SK-N-SH (cell line): ENCODE measurements at regions of chr12 and their contacts with region 1.

Region 1: DNA sequence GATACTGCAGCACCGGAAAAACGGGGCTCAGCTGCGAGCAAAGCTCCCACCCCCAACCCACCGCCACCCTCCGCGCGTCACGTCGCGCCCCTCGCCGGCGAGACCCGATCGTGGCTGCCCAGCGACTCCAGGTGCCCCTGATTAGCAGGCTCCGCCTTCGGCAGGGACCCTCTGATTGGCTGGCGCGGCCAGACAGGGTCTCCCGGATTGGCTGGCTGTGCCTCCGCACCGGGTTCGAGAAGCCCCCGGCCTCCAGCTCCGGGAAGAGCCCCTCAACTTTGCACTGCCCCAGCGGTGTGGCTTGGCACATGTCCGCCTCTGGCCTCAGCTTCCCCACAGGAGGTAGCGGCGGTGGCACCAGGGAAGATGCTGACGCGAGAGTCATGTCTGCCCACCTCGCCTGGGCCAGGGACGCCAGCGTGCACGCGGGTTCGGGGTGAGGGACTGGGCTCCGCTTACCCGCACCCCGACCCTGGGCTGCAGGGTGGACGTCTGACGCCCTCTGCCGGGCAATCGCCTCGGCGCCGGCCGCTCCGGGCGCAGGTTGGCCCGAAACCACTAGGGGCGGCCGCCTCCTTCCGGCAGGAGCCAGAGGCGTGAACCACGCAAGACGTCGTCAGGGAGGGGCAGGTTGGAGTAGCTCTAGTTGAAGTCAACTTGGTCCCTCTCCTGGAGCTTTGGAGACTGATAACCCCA is 498 bp upstream of the RHOF start:
- DNase-seq: peak; percentile 94
- H3K4me3 ChIP-seq: peak overlapping the region; percentile 54 to 61
- H3K27ac ChIP-seq: peak overlapping the region; percentile 82 to 99
- H3K4me1 ChIP-seq: peaks cover 36 to 62% of the 10 kb centered on the region in 2 experiments
- H3K27me3 ChIP-seq: no peaks in the 10 kb centered on the region
- CTCF ChIP-seq: peak; percentile 97
- EP300 ChIP-seq: peak in 1 of 2 experiments; percentile 9; a peak in 1 of 4 replicates
- RAD21 ChIP-seq: peak; percentile 83

Region 2: GRCh38 chr12:121697098-121697698 is 96.8 kb before region 1 on chr12:
- CTCF ChIA-PET with region 1: interaction called, 69 read pairs
- POLR2A ChIA-PET with region 1: no interaction called
- DNase-seq: peak; percentile 51
- H3K4me3 ChIP-seq: peak overlapping the region in 1 of 2 experiments; percentile 17; a peak in 1 of 4 replicates
- H3K27ac ChIP-seq: peak overlapping the region in 1 of 2 experiments; percentile 13; a peak in 1 of 4 replicates
- H3K4me1 ChIP-seq: no peaks in the 10 kb centered on the region
- H3K27me3 ChIP-seq: no peaks in the 10 kb centered on the region
- CTCF ChIP-seq: peak; percentile 70
- EP300 ChIP-seq: no peak
- RAD21 ChIP-seq: peak; percentile 80

Region 3: DNA sequence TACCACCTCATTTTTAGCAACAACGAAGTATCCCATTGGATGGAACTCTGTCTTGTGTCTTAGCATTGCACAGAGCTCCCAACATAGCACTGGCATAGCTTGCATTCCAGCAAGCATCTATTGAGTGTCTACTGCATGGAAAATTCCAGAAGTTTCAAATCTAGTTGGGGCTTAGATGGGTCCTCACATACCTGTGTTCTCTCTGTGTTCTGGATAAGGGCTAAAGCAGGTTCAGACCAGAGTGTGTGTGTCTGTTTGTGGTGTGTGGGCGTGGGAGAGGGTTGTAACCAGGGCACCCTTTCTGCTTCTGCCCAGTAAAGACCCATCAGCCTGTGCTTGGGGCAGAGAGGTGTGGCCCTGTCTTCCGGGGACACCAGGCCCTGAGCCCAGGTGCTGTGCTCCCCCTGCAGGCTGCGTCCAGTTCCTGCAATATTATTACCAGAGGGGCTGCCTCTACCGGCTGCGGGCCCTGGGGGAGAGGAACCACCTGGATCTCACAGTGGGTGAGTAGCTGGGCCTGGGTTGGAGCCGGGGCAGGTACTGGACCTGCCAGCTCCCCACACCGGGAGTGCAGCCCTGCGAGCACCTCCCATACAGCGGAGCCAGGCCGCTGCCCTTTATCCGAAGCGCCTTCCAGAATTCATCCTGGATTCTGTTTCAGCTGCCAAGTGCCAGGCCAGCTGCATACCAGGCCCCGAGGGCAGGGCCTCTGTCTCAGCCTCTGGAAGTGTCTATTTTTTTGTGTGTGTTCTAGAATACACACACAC is 20.8 kb before region 1 on chr12:
- CTCF ChIA-PET with region 1: interaction called, 382 read pairs
- POLR2A ChIA-PET with region 1: no interaction called
- DNase-seq: peak; percentile 91
- H3K4me3 ChIP-seq: no peak overlapping the region; a peak in 1 of 4 replicates
- H3K27ac ChIP-seq: peak overlapping the region in 1 of 2 experiments; percentile 45; a peak in 1 of 4 replicates
- H3K4me1 ChIP-seq: peaks cover 0 to 12% of the 10 kb centered on the region in 2 experiments; a peak in 1 of 4 replicates
- H3K27me3 ChIP-seq: no peaks in the 10 kb centered on the region
- CTCF ChIP-seq: peak; percentile 89
- EP300 ChIP-seq: 0 out of 4 replicates have a peak, but pooled peaks of 1 of the 2 experiments have one; percentile 12
- RAD21 ChIP-seq: peak; percentile 88

Region 4: DNA sequence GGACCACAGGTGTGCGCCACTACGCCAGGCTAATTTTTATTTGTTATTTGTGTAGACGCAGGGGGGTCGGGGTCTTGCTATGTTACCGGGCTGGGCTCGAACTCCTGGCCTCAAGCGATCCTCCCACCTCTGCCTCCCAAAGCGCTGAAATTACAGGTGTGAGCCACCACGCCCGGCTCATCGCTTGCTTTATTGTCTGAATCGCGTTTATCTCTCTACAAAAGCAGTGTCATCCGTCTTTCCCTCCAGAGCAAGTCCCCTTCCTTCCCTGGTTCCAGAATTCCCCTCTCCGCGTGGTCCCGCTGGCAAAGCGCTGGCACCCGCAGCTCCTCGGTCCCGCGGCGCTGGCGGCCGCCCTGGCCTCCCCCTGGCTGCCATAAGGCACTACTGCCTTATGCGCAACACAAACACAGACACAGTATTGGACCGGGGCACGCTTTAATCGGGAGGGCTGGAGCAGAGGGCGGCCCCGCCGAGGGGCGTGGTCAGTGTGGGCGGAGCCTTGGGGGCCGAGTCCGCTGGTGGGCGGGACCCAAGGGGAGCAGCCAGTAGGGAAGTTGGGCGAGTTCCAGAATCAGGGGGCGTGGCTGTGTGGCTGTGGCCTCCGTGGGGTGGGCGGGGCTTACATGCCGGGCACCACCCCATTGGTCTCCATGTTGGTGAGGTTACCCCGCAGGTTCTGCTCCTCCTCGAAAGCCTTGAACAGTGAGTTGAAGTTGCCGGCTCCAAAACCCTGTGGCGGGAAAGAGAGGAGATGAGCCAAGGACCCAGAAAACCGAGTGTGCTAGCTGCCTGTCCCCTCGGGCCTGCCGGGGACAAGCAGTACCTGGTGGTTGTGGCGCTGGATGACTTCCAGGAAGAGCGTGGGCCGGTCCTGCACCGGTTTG is 45.4 kb after region 1 on chr12:
- CTCF ChIA-PET with region 1: interaction called, 49 read pairs
- POLR2A ChIA-PET with region 1: interaction called, 3 read pairs
- DNase-seq: peak; percentile 99
- H3K4me3 ChIP-seq: peak overlapping the region; percentile 57 to 74
- H3K27ac ChIP-seq: peak overlapping the region; percentile 32 to 48; a peak in 2 of 4 replicates
- H3K4me1 ChIP-seq: no peaks in the 10 kb centered on the region; a peak in 1 of 4 replicates
- H3K27me3 ChIP-seq: no peaks in the 10 kb centered on the region
- CTCF ChIP-seq: peak; percentile 40; the same call in 1 of the 2 replicates
- EP300 ChIP-seq: no peak
- RAD21 ChIP-seq: no peak

Region 5: GRCh38 chr12:121883315-121883660 is 89.3 kb after region 1 on chr12:
- CTCF ChIA-PET with region 1: interaction called, 186 read pairs
- POLR2A ChIA-PET with region 1: interaction called, 34 read pairs
- DNase-seq: no peak
- H3K4me3 ChIP-seq: no peak overlapping the region
- H3K27ac ChIP-seq: no peak overlapping the region
- H3K4me1 ChIP-seq: no peaks in the 10 kb centered on the region; a peak in 2 of 4 replicates
- H3K27me3 ChIP-seq: no peaks in the 10 kb centered on the region
- CTCF ChIP-seq: no peak
- EP300 ChIP-seq: no peak
- RAD21 ChIP-seq: no peak

Region 6: GRCh38 chr12:122021822-122022526 is 228.0 kb after region 1 on chr12 and contains the start of gene BCL7A:
- CTCF ChIA-PET with region 1: interaction called, 12 read pairs
- POLR2A ChIA-PET with region 1: no interaction called
- DNase-seq: peak; percentile 92
- H3K4me3 ChIP-seq: peak within 1 kb of the TSS; percentile 66 to 86
- H3K27ac ChIP-seq: peak within 1 kb of the TSS; percentile 74 to 93
- H3K4me1 ChIP-seq: peaks cover 10 to 20% of the 10 kb centered on the region in 2 experiments; a peak in 2 of 4 replicates
- H3K27me3 ChIP-seq: no peaks in the 10 kb centered on the region
- CTCF ChIP-seq: no peak
- EP300 ChIP-seq: no peak
- RAD21 ChIP-seq: no peak
- polyA plus RNA-seq, gene BCL7A: 30.8 and 34.0 TPM in 2 replicates